ENCODE measurements at regions of chr20 and their contacts with region 1.

Region 1: DNA sequence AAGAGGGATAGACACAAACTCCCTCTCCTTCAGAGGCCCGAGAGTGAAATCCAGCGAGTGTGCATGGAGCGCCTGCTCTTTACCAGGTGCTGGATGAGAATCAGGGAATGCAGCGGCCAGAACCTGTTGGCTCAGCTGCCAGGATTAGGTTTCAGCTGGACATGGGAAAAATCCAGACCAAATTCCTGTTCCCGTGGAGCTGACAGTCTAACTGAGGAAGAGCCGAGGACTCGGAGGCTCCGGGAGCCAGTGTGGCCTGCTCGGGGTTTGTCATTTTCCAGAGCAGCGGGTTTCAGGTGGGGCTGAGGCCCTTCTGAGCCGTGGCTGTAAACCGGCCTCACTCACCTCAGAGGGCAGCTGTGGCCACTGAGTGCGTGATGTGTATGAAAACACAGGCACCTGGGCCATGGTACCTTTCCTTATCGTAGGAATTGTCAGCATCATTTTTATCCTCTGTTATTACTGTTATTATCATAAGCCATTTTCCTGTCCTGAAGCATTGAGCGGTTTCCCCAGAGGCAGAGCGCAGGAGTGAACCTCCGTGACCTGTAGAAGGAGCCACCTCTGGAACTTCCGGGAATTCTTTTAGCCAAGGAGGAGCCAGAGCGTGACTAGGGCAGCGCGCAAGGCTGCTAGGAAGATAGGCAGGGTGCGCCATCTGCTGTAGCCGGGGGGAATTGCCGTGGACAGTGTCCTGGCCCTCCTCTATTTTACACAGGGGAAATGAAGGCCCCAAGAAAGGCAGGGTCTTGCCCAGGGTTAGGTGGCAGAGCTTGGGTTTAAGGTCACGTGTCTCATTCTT is 27.3 kb downstream of the PKIG start:
- DNase-seq: peak; percentile 77 to 91 (median 86)
- ATAC-seq: peak; percentile 73 to 80
- H3K4me3 Mint-ChIP-seq: peak overlapping the region; percentile 65 to 90 (median 82)
- H3K27ac Mint-ChIP-seq: peak overlapping the region; percentile 97 to 100 (median 100)
- H3K4me1 Mint-ChIP-seq: peaks cover 19 to 51% (median 42%) of the 10 kb centered on the region in 4 donors
- H3K27me3 Mint-ChIP-seq: peaks cover 0 to 3% (median 0%) of the 10 kb centered on the region in 5 donors

Region 2: DNA sequence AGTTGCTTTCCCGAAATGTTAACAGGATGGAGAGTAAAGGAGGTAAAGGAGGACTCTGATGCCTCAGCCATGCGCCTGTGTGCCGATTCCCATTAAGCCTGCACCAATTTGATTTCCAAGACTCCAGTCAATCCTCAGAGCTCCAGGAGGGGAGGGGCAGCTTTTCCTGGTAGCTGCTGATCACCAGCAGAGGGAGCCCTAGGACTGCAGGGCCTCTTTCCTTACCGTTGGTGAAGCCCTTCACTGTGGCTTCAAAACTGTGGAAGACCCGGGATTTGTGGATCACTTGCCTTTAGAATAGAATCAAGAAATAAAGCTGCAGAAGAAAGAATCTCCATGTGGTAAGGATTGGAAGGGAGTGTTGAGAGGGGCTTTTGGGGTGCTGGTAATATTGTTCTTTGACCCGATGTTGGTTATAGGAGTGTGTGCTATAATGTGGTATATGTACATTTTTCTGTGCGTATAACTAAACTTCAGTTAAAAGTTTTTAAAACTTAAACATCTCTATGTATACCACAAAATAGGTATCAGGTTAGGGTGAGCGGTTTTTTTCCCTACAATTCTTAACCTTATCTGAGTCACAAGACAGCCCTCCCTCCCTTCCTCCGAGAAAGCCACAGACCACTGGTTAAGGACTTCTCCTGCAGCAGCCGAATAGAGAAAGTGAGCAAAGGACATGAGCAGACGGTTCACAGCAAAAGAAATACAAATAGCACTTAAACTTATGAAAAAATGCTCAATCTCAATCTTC is 392.2 kb before region 1 on chr20:
- POLR2A ChIA-PET with region 1: interaction called, 19 read pairs
- DNase-seq: peak; percentile 54 to 86 (median 70)
- ATAC-seq: peak; percentile 48 to 59
- H3K4me3 Mint-ChIP-seq: peak overlapping the region; percentile 65 to 89 (median 84)
- H3K27ac Mint-ChIP-seq: peak overlapping the region; percentile 93 to 97 (median 96)
- H3K4me1 Mint-ChIP-seq: peaks cover 43 to 79% (median 67%) of the 10 kb centered on the region in 4 donors
- H3K27me3 Mint-ChIP-seq: no peaks in the 10 kb centered on the region

Region 3: GRCh38 chr20:44475694-44476560 is 133.8 kb before region 1 on chr20 and contains the start of gene TTPAL:
- POLR2A ChIA-PET with region 1: interaction called, 15 read pairs
- DNase-seq: peak; percentile 80 to 91 (median 86)
- ATAC-seq: peak; percentile 94 to 96
- H3K4me3 Mint-ChIP-seq: peak within 1 kb of the TSS; percentile 89 to 98 (median 92)
- H3K27ac Mint-ChIP-seq: peak within 1 kb of the TSS; percentile 91 to 99 (median 96)
- H3K4me1 Mint-ChIP-seq: peaks cover 13 to 33% (median 30%) of the 10 kb centered on the region in 4 donors
- H3K27me3 Mint-ChIP-seq: no peaks in the 10 kb centered on the region
- polyA plus RNA-seq, gene TTPAL: 10.5 to 15.3 (median 15.3) TPM

Region 4: DNA sequence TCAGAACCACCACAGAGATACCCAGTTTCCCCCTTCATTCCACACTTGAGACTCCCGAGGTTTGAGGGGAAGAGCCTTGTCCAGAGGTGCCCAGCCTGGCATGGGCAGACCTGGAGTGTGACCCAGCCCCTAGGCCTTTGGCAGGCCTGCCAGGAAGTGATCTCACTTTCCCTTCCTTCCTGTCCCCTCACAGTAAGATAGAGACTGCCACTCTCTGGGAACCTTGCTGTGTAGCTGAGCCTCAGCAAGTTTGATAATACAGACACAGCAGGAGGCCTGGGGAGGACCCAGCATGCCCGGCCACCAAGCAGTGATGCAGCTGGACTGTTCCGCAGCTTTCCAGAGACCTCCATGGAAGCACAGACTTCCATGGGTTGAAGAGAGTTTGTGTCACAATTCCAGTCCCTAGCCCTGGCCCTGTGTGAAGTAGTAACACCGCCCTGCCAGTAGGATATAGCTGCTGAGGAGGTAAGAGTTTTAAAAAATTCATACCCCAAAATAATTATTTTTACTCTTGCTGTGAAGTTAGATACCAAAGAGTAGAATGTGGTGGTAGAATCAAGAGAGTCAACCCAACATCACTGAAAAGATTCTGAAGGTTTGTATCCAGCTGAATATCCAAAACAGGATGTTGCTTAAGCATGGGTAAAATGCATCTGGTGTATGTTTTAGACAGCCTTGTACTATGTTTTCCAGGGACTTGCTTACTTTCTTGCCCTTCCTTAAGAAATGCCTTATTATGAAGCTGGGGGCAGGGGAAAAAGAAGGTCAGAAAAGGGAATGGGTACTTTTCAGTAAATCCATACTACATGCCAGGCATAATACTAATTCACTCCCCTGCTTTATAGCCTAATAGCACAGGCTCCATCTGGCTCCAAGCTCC is 11.0 kb before region 1 on chr20:
- POLR2A ChIA-PET with region 1: interaction called, 12 read pairs
- DNase-seq: peak in 2 of 10 donors; percentile 22 to 59
- ATAC-seq: peak; percentile 80 to 82
- H3K4me3 Mint-ChIP-seq: peak overlapping the region; percentile 70 to 86 (median 76)
- H3K27ac Mint-ChIP-seq: peak overlapping the region; percentile 87 to 96 (median 93)
- H3K4me1 Mint-ChIP-seq: peaks cover 25 to 76% (median 41%) of the 10 kb centered on the region in 4 donors
- H3K27me3 Mint-ChIP-seq: no peaks in the 10 kb centered on the region

Region 5: DNA sequence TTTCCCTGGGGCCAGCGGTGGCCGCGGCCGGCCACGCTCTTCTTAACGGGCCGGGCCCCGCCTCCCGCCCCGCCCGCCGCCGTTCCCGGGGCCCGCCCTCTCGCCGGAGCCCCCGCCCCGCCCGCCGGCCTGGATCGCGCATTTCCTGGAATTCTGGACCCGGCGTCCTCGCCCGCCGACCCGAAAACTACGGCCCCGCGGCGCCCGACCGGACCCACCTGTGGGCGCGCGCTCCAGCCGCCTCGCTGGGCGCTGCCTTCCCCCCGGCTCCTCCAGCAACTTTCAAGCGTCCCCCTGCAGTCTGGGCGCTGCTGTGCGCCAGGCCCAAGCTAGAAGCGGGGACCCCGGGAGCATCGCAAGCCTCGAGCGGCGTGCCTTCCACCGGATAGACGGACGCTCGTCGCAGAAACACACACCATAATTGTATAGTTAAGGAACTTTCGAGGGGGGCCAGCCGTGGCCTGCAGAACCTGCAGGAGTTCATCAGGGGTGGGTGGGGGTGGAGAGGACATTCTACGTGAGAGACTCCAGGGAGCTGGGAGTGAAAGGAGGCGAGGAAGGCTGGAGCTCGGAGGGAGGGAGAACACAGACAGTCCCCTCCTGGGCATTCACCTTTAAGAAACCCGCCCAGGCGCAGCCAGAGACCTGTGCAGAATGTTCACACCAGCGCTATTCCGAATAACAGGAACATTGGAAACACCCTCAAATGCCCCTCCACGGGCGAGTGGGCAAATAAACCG is 42.1 kb after region 1 on chr20 and contains the start of gene ADA:
- POLR2A ChIA-PET with region 1: interaction called, 84 read pairs
- DNase-seq: peak; percentile 21 to 71 (median 51)
- ATAC-seq: peak; percentile 76 to 80
- H3K4me3 Mint-ChIP-seq: peak within 1 kb of the TSS; percentile 82 to 96 (median 92)
- H3K27ac Mint-ChIP-seq: peak within 1 kb of the TSS; percentile 85 to 100 (median 92)
- H3K4me1 Mint-ChIP-seq: peaks cover 18 to 56% (median 52%) of the 10 kb centered on the region in 4 donors
- H3K27me3 Mint-ChIP-seq: peaks cover 0 to 2% (median 0%) of the 10 kb centered on the region in 5 donors
- polyA plus RNA-seq, gene ADA: 31.2 to 47.1 (median 38.2) TPM

Measured in naive thymus-derived CD8-positive, alpha-beta T cell (primary cell).